ENCODE measurements at regions of chr3 and their contacts with region 1.

Region 1: GRCh38 chr3:195882002-195882441 is 26.3 kb downstream of the TNK2 start:
- DNase-seq: peak in 4 of 10 donors; percentile 12 to 76 (median 55)

Region 2: GRCh38 chr3:195727606-195728195 is 154.3 kb before region 1 on chr3:
- intact Hi-C with region 1: no loop called
- DNase-seq: peak in 6 of 10 donors; percentile 18 to 90 (median 70)

Region 3: DNA sequence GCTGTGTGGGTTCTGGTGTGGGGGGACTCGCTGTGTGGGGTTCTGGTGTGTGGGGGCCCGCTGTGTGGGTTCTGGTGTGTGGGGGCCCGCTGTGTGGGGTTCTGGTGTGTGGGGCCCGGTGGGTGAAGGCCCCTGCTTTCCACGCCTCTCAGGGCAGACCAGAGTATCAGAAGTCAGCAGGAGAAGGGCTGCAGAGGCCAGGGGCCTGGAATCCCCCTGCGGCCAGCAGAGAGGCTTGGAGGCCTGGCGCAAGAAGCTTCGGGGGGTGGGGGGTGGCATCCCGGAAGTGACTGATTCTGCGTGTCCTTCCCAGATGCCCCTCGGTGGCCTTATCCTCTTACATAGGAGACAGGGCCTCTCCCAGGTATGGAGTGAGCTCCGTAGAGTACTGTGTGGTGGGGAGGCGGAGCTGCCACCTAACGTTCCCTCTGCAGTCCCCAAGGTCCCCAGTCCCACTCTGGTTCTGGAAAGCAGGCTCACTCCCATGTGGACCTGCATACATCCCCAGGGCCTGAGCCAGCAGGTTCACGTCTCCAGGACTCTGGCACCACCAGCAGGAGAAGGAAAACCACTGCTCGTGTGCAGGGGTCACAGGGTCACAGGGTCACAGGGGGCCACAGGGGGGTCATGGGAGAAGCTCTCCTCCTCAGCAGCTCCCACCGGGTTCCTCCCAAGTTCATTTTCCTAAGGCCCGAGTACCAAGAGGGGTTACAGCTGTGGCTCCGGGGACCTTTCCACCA is 10.9 kb before region 1 on chr3:
- intact Hi-C with region 1: loop called (anchors 1 kb)
- DNase-seq: peak in 2 of 10 donors; percentile 43 to 52